Common myeloid progenitor, CD34-positive (primary cell): ENCODE measurements at regions of chr10 and their contacts with region 1.

Region 1: GRCh38 chr10:122541541-122542002 is 19.0 kb upstream of the DMBT1 start:
- DNase-seq: peak; percentile 75 to 93 (median 86)
- H3K4me3 ChIP-seq: no peak overlapping the region
- H3K27ac ChIP-seq: no peak overlapping the region
- H3K4me1 ChIP-seq: peaks cover 0 to 28% (median 9%) of the 10 kb centered on the region in 4 experiments
- H3K27me3 ChIP-seq: peaks cover 0 to 44% (median 4%) of the 10 kb centered on the region in 5 experiments

Region 2: DNA sequence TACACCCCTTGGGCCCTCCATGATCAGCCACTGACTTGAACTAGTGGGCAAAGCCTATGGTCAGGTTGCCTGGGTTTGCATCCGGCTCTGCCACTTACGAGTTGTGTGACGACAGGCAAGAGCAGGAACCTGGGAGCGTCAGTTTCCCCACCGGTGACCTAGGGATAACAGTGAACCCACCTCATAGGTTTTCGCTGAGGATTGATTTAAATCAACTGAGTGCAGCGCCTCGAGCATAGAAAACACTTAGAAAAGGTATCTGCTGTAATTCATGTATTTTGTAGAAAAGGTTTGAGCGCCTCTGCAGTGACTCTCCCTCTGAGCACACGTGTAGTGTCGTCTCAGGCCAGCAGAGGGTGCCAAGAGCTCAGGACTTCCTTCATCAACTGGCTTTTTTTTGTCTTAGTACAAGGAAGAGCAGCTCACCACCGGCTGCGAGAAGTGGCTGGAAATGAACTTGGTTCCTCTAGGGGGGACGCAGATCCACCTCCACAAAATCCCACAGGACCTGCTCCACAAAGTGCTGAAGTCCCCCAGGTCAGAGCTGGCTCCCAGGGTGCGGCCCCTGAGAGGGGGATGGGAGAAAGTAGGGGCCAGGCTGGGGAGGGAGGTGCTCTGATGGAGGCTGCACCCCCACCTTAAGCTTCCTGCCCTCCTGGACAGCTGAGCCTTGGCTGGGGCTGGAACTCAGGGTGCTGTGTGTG is 242.8 kb before region 1 on chr10:
- CTCF ChIA-PET with region 1: no interaction called
- POLR2A ChIA-PET with region 1: interaction called, 10 read pairs
- DNase-seq: peak; percentile 61 to 84 (median 79)
- H3K4me3 ChIP-seq: peak overlapping the region in 2 of 7 experiments; percentile 36 to 45
- H3K27ac ChIP-seq: no peak overlapping the region
- H3K4me1 ChIP-seq: peaks cover 0 to 3% (median 0%) of the 10 kb centered on the region in 4 experiments
- H3K27me3 ChIP-seq: peaks cover 0 to 5% (median 0%) of the 10 kb centered on the region in 5 experiments

Region 3: DNA sequence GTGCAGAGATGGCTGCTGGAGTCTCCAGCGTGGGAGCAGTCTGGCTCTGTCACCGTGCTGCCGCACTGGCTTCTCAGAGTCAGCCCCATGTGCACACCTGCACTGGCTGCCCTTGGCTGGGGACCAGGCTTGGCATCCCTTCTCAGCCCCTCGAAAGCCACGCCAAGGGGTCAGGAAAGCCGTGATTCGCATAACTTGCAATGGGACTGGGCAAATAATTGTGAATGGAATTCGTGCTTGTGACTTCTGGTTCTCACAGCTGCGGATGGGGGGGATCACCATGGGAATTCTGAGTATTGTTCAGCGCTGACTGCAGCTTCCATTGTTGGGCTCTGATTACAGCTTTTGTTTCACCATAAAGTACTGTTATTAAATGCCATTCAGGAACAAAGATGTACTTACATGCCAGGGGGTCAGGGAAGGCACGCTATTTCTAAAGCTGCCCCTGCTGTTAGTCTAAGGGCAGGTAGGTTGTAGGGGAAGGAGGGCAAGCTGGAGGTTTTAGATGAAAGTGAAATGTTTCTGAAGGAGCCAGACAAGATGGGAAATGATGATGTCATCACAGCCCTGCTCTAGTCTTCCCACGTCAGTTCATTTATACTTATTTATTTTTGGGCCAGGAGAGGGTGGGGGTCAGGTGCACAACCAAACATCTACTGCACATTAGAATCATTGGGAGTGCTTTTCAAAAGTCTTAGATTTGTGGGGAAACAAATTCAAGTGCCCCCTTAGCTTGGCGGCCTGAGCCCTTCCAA is 172.9 kb before region 1 on chr10:
- CTCF ChIA-PET with region 1: no interaction called
- POLR2A ChIA-PET with region 1: no interaction called
- DNase-seq: no peak
- H3K4me3 ChIP-seq: no peak overlapping the region
- H3K27ac ChIP-seq: no peak overlapping the region
- H3K4me1 ChIP-seq: peaks cover 1 to 2% (median 2%) of the 10 kb centered on the region in 4 experiments
- H3K27me3 ChIP-seq: peaks cover 5 to 28% (median 15%) of the 10 kb centered on the region in 5 experiments